ENCODE measurements at regions of chr9 and their contacts with region 1.

Region 1: DNA sequence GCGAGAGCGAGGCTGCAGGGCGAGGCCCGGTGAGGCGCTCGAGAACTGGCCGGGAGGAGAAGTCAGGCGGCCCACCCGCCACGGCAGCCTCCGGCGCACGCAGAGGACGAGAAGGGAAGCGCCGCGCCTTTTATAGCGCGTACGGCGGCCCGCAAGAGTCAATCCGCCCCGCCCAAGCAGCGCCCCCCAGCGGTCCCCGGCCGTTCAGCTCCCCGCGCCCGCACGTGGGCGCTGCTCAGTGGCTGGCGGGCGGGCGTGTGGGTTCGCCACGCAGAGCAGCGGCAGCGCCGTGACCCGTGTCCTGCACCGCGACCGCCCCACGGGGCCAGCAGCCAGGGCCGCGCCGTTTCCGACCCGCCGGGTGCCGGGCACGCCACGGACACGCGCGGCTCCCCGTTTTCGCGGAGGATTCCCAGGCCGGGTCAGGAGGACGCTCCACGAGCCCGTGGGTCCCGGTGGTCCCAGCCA is 14.6 kb downstream of the LCN10 start:
- DNase-seq: peak; percentile 90
- ATAC-seq: peak; percentile 77
- H3K4me3 Mint-ChIP-seq: peak overlapping the region; percentile 100
- H3K27ac Mint-ChIP-seq: no peak overlapping the region
- H3K4me1 Mint-ChIP-seq: peaks cover 46% of the 10 kb centered on the region
- H3K27me3 Mint-ChIP-seq: no peaks in the 10 kb centered on the region
- CTCF ChIP-seq: peak; percentile 90

Region 2: GRCh38 chr9:136679431-136679941 is 48.6 kb before region 1 on chr9:
- CTCF ChIA-PET with region 1: interaction called, 5 read pairs
- POLR2A ChIA-PET with region 1: interaction called, 16 read pairs
- intact Hi-C with region 1: no loop called
- DNase-seq: no peak
- ATAC-seq: no peak
- H3K4me3 Mint-ChIP-seq: no peak overlapping the region
- H3K27ac Mint-ChIP-seq: no peak overlapping the region
- H3K4me1 Mint-ChIP-seq: no peaks in the 10 kb centered on the region
- H3K27me3 Mint-ChIP-seq: no peaks in the 10 kb centered on the region
- CTCF ChIP-seq: no peak

Region 3: DNA sequence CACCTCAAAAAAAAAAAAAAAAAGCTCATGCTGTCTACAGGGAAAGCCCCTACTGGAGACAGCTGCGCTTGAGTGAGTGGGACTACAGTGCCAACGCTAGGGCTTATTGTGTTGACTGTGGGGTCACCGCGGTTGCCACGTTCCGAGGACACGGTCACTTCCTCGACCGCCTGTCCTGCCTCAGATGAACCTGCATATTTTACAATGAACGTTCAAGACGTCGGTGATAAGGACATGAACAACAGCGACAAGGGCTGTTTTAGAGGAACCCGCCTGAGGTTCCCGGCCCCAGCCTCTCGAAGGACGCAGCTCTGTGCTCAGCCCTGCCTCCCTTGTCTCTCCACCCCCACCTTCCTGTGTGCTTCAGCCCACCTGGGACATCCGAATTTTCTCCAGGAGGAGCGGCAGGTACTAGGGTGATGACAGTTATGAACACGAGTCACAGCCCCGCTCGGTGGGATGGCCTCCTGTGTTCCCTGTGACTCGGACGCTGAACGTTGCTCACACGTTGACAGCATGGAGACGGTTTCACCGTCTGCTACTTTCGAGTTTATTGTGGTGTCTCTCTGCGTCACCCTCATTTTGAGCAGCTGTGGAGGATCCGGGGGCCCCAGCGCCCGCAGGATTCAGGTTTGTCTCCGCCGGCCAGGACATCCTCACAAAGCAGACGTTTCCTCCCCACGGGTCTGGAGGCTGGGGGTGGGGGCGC is 27.0 kb before region 1 on chr9:
- CTCF ChIA-PET with region 1: interaction called, 4 read pairs
- POLR2A ChIA-PET with region 1: interaction called, 44 read pairs
- intact Hi-C with region 1: no loop called
- DNase-seq: peak; percentile 93
- ATAC-seq: peak; percentile 93
- H3K4me3 Mint-ChIP-seq: peak overlapping the region; percentile 76
- H3K27ac Mint-ChIP-seq: peak overlapping the region; percentile 97
- H3K4me1 Mint-ChIP-seq: peaks cover 26% of the 10 kb centered on the region
- H3K27me3 Mint-ChIP-seq: peaks cover 19% of the 10 kb centered on the region
- CTCF ChIP-seq: no peak

Region 4: GRCh38 chr9:136707849-136708517 is 20.1 kb before region 1 on chr9:
- CTCF ChIA-PET with region 1: no interaction called
- POLR2A ChIA-PET with region 1: interaction called, 44 read pairs
- intact Hi-C with region 1: no loop called
- DNase-seq: no peak
- ATAC-seq: no peak
- H3K4me3 Mint-ChIP-seq: no peak overlapping the region
- H3K27ac Mint-ChIP-seq: no peak overlapping the region
- H3K4me1 Mint-ChIP-seq: peaks cover 5% of the 10 kb centered on the region
- H3K27me3 Mint-ChIP-seq: peaks cover 18% of the 10 kb centered on the region
- CTCF ChIP-seq: no peak

Region 5: DNA sequence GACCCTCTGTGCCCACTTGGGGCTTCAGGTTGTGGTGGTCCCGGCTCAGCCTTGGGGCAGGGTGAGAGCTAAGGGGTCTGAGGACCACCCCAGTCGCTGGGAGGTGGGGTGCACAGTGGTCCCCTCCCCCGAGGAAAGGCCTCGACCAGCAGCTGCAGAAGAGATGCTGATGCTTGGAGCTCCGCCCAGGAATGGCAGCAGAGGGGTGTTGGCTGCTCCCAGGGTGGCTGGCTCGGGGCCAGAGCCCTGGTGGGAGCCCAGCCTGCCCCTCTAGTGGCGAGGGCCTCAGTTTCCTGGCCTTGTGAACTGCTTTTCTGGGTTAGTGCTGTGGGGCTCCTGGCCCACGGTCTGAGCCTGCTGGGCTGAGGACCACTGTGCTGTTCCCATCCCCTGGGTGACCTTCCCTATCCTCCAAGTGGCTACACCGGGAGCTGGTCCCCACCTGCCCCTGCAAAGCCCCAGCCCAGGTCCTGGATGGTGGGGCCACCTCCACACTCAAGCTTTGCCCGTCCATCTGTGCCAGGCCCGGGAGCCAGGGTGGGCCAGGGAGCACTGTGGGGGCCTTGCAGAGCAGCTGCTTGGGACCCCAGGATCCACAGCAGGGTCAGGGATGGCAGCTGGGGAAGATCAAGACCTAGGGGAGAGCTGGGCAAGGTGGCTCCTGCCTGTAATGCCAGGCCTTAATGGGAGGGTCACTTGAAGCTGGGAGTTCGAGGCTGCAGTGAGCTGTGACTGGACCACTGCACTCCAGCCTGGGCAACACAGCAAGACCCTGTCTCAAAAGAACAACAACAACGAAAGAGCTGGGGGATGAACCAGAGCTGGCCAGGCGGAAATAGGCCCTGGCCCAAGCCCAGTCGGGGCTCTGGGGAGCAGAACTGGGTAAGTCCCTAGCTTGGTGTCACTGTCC is 14.3 kb before region 1 on chr9:
- CTCF ChIA-PET with region 1: interaction called, 3 read pairs
- POLR2A ChIA-PET with region 1: interaction called, 21 read pairs
- intact Hi-C with region 1: no loop called
- DNase-seq: no peak
- ATAC-seq: no peak
- H3K4me3 Mint-ChIP-seq: no peak overlapping the region
- H3K27ac Mint-ChIP-seq: no peak overlapping the region
- H3K4me1 Mint-ChIP-seq: peaks cover 2% of the 10 kb centered on the region
- H3K27me3 Mint-ChIP-seq: peaks cover 32% of the 10 kb centered on the region
- CTCF ChIP-seq: no peak

Region 6: GRCh38 chr9:136742591-136743391 is 14.7 kb after region 1 on chr9 and contains the start of gene LCN10:
- CTCF ChIA-PET with region 1: interaction called, 15 read pairs
- POLR2A ChIA-PET with region 1: interaction called, 35 read pairs
- intact Hi-C with region 1: no loop called
- DNase-seq: no peak
- ATAC-seq: peak; percentile 4
- H3K4me3 Mint-ChIP-seq: peak within 1 kb of the TSS; percentile 70
- H3K27ac Mint-ChIP-seq: peak within 1 kb of the TSS; percentile 75
- H3K4me1 Mint-ChIP-seq: peaks cover 21% of the 10 kb centered on the region
- H3K27me3 Mint-ChIP-seq: no peaks in the 10 kb centered on the region
- CTCF ChIP-seq: no peak
- total RNA-seq, gene LCN10: 2.6 to 3.2 TPM

Region 7: DNA sequence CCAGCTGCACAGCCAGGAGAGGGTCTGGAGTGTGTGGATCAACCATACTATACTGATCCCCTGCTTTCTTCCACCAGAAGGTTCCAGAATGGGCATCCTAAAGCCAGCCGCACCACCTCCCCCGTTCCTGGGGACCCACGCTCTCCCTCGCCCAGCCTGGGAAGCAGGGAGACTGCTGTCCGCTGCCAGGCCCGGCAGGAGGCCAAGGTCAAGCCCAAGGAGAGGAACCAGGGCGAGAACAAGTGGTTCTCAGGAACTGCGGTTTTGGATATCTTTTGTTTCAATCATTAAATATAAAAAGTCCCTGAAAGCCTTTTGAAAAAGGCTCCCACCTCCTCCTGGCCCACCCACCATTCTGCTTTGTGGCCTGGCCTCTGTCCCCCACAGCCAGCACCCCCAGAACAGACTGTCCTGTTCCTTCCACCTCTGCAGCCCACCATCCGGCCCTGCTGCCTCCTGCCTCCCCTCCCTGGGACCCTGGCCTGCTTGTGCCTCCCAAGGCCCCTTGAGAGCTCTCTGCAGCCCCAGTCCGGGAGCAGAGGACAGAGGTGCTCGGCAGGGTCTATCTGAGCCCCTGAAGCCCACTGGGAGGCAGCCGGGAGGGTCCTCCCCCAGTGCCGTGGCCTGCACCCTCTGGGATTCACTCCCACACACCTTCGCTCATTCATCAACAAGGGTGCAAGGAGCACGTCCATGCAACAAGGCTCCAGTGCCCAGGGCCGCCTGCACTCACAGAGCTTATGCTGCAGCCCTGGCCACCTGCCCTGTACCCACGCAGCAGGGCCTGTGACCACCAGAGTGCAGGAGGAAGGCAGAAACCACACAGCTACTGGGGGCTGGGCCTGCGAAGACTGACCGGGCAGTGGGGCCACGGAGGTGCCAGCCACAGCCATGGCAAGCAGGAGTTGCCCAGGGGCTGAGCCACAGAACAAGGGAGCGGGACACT is 20.8 kb after region 1 on chr9:
- CTCF ChIA-PET with region 1: interaction called, 4 read pairs
- POLR2A ChIA-PET with region 1: interaction called, 10 read pairs
- intact Hi-C with region 1: no loop called
- DNase-seq: no peak
- ATAC-seq: no peak
- H3K4me3 Mint-ChIP-seq: no peak overlapping the region
- H3K27ac Mint-ChIP-seq: no peak overlapping the region
- H3K4me1 Mint-ChIP-seq: peaks cover 8% of the 10 kb centered on the region
- H3K27me3 Mint-ChIP-seq: peaks cover 5% of the 10 kb centered on the region
- CTCF ChIP-seq: no peak